ENCODE measurements at regions of chr12 and their contacts with region 1.

Region 1: DNA sequence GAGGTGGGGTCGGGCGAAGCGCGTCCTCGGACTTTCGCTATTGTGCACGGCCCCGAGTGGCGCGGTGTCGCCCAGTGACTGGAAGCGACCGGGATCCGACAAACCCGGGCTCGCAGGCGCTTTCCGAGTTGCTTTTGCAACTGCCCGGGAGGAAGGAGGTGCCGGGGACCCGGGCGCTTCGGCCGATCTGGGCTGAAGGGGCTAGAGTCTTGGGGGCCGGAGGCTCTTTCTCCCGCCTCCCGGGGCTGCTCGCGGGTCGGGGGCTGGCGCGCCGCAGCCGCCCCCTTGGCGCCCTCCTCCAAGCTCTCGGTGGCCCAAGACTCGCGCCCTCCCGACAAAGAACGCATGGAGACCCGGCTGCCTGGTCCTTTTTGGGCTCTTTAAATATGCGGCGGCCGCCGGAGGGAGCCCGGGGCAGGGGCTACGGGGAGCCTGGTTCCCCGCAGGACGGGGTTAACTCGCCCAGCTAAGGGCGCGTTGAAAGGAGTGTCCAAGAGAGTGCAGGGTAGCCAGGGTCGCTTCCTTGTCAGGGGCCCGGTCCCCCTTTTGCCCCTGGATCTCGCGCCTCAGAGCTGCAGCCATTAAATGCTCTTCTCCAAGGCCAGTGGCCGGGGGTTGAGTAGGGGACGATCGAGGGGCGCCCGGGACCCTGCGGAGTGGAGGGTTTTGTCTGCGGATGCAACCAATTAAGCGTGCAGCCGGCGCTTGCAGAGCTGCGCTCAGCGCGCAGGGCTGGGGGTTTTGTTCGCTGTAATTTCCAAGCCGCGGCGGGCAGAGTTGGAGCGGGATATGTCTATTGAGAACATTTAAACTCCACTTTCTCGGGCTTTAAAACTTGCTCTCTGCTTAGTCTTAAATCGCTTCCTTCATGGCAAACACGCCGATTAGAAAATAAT is 1.6 kb downstream of the HMGA2 start:
- DNase-seq: no peak
- H3K4me3 ChIP-seq: peak overlapping the region; percentile 82
- CTCF ChIP-seq: no peak

Region 2: DNA sequence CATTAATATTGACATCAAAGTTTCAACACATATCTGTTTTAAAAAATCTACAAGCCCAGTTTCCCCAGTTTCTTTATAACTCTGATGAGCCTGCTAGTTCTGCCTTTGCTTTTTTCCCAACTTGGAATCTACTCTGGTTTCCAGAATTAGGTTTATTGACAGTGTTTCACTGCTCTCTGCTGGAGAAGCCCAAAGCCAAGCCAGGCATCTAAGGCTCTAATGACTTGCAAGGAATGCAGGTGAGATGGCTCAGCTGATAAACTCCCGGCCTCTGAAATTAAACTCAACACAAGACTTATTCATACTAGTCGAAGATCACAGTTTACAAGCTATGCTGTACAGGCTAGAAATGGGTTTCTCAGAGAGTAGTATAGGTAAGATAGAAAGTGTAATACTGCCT is 52.7 kb after region 1 on chr12:
- in situ Hi-C with region 1: loop called (anchors 5 kb)
- DNase-seq: no peak
- H3K4me3 ChIP-seq: no peak overlapping the region
- CTCF ChIP-seq: peak; percentile 63

Measured in astrocyte of the cerebellum (primary cell).